Activated CD4-positive, alpha-beta T cell treated with anti-CD3 and anti-CD28 coated beads for 36 hours (primary cell): ENCODE measurements at regions of chr16 and their contacts with region 1.

Region 1: DNA sequence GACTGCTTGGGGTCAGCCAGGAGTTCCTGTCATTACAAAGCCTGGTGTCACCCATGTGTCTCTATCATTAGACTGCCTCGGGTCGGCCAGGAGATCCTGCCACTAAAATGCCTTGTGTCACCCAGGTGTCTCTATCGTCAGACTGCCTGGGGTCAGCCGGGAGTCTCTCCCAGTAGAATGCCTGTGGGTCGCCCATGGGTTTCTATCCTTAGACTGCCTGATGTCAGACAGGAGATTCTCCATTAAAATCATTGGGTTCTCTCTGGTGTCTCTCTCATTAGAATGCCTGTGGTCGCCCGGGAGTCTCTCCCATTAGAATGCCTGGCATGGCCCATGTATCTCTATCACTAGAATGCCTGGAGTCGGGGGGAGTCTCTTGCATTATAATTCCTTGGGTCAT is 2231.0 kb downstream of the TP53TG3F start:
- DNase-seq: no peak
- ATAC-seq: no peak
- H3K4me3 Mint-ChIP-seq: no peak overlapping the region
- H3K27ac Mint-ChIP-seq: no peak overlapping the region
- H3K4me1 Mint-ChIP-seq: no peaks in the 10 kb centered on the region
- H3K27me3 Mint-ChIP-seq: no peaks in the 10 kb centered on the region

Region 2: DNA sequence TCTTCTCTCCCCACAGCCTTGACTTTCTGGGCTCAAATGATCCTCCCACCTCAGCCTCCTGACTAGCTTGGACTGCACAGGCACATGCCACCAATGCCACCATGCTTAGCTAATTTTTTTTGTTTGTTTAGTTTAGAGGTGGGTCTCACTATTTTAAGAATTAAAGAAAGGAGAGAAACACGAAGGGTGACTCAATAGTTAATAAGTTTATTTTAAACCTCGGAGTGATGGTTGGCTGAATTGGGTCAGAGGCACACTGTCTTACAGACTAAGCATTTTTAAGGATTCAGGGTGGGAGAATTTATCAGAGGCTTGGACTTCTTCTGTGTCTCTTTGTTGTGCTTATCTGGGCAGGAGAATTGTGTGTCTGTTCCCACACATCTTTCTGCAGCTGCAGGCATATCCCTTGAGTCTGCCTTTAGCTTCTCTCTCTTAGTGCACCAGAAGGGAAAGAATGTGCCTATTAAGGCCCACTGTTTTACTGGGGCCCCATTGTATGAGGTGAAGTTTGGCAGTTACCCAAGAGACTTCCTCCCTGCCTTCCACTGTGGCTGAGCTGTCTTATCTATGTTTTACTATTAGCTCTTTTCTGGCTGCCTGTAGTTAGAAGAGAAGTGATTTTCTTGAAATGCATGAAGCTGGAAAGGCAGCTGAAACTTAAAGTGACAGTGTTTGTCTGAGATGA is 59.0 kb before region 1 on chr16:
- CTCF ChIA-PET with region 1: no interaction called
- POLR2A ChIA-PET with region 1: no interaction called
- intact Hi-C with region 1: loop called in 1 of 2 experiments (anchors 10 kb)
- DNase-seq: no peak
- ATAC-seq: no peak
- H3K4me3 Mint-ChIP-seq: no peak overlapping the region
- H3K27ac Mint-ChIP-seq: no peak overlapping the region
- H3K4me1 Mint-ChIP-seq: no peaks in the 10 kb centered on the region
- H3K27me3 Mint-ChIP-seq: no peaks in the 10 kb centered on the region